ENCODE measurements at regions of chr6 and their contacts with region 1.

Region 1: GRCh38 chr6:64330694-64331307 is 695.2 kb downstream of the PHF3 start:
- DNase-seq: no peak
- ATAC-seq: no peak
- H3K4me3 ChIP-seq: no peak overlapping the region
- H3K27ac ChIP-seq: no peak overlapping the region
- H3K4me1 ChIP-seq: no peaks in the 10 kb centered on the region
- H3K27me3 ChIP-seq: no peaks in the 10 kb centered on the region
- CTCF ChIP-seq: peak in 2 of 3 experiments; percentile 43 to 50; a peak in 4 of 6 replicates
- POLR2A ChIP-seq: no peak
- RAD21 ChIP-seq: peak; percentile 17; the same call in 1 of the 2 replicates

Region 2: DNA sequence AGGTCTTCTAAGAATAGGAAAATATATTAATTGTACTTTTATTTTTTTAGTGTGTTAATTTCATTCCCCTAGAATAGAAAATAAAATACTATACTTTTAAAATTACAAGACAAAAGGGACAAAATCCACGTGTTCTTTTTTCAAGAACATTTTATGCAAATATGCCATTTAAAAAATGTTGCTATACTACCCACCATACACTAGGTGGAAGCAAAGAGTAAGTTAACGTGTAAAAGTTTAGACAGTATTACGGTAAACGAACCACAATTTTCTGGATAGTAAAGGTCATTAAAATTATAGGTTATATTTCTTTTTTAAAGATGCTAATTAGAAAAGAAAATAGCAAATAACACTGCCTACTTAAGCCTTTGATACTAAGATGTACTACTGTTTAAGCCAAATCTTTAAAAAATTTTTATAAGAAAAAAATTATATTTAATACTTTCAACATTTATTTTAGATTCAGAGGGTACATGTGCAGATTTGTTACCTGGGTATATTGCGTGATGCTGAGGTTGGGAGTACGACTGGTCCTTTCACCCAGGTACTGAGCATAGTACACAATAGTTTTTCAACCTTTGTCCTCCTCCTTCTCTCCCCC is 407.6 kb before region 1 on chr6:
- CTCF ChIA-PET with region 1: interaction called, 4 read pairs
- POLR2A ChIA-PET with region 1: no interaction called
- RAD21 ChIA-PET with region 1: no interaction called
- intact Hi-C with region 1: loop called (anchors 2 kb)
- DNase-seq: peak; percentile 21
- ATAC-seq: no peak
- H3K4me3 ChIP-seq: no peak overlapping the region
- H3K27ac ChIP-seq: no peak overlapping the region
- H3K4me1 ChIP-seq: no peaks in the 10 kb centered on the region
- H3K27me3 ChIP-seq: peaks cover 4% of the 10 kb centered on the region; the same call in 1 of the 2 replicates
- CTCF ChIP-seq: peak; percentile 12 to 59 (median 45); a peak in 3 of 6 replicates
- POLR2A ChIP-seq: no peak
- RAD21 ChIP-seq: peak; percentile 54

Region 3: DNA sequence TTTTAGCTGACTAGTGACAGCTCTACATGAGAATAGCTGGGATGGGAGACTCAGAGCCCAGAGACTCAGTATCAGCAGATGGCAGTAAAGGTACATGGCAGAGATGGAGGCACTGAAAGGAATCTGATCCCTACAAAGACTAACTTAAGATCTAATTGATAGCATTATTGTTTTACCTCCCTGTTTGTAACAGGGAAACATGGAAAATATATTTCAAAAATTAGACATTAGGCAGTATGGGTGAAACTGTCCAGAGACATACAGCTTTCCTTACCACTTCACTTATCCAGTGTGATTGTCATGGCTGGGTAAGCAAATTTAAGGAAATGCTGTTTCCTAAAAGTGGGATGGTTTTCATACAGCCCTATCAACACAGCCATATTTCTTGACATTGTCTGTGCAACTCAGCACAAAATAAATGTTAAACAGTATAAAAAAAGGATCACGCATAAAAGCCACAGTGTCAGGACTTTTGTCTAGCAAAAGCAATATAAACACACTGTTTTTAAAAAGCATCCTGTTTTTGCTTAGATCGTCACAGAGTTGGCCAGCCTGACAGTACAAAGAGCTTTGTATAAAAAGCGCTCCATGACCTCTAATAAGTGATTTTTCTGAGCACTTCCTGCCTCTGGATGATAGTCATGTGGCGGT is 318.3 kb before region 1 on chr6:
- CTCF ChIA-PET with region 1: interaction called, 19 read pairs
- POLR2A ChIA-PET with region 1: no interaction called
- RAD21 ChIA-PET with region 1: interaction called in 1 of 2 experiments, 4 read pairs
- intact Hi-C with region 1: loop called (anchors 2 kb)
- DNase-seq: no peak
- ATAC-seq: no peak
- H3K4me3 ChIP-seq: no peak overlapping the region
- H3K27ac ChIP-seq: no peak overlapping the region
- H3K4me1 ChIP-seq: no peaks in the 10 kb centered on the region
- H3K27me3 ChIP-seq: no peaks in the 10 kb centered on the region
- CTCF ChIP-seq: peak in 2 of 3 experiments; percentile 30 to 36; a peak in 2 of 6 replicates
- POLR2A ChIP-seq: no peak
- RAD21 ChIP-seq: peak; percentile 27; the same call in 1 of the 2 replicates

Region 4: DNA sequence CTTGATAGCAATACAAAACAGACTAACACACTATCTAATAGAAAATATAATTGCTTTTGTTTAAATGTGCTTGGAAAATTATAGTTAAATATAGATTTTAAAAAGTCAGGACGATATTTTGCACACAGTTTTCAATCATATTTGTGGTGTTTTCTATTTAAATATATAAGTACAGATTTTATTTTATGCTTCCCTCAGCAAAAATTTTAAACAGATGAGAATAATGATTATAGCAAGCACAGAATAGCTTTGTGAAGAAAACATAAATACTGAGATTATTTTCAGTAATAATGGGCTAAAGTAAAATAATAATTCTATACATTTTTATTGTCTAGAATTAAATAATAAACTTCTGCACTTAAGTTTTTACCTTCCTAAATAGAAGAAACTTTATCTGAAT is 114.2 kb after region 1 on chr6:
- CTCF ChIA-PET with region 1: no interaction called
- POLR2A ChIA-PET with region 1: no interaction called
- RAD21 ChIA-PET with region 1: no interaction called
- intact Hi-C with region 1: no loop called
- DNase-seq: no peak
- ATAC-seq: no peak
- H3K4me3 ChIP-seq: no peak overlapping the region
- H3K27ac ChIP-seq: no peak overlapping the region
- H3K4me1 ChIP-seq: no peaks in the 10 kb centered on the region
- H3K27me3 ChIP-seq: no peaks in the 10 kb centered on the region
- CTCF ChIP-seq: no peak
- POLR2A ChIP-seq: no peak
- RAD21 ChIP-seq: no peak

Measured in HCT116 (cell line).